ENCODE measurements at regions of chr7 and their contacts with region 1.

Region 1: DNA sequence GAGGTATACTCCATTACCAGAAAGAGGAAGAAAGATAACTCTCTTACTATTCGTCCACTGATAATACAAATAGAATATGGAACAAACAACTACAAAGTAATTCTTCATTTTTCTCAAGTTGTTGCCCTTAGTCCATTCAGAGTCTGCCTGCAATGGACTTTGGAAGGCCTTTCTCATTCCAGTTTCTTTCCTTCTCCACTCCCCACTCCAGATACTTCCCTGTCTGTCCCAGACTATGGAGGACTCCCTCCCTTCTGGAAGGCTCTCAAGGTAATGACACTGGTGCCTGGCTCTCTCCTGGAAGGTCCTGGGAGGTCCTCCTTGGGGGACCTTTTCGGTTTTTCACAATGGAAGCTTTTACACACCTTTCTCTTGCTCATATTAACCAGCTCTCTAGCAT is 167.8 kb downstream of the SDHAF3 start:
- DNase-seq: no peak

Region 2: DNA sequence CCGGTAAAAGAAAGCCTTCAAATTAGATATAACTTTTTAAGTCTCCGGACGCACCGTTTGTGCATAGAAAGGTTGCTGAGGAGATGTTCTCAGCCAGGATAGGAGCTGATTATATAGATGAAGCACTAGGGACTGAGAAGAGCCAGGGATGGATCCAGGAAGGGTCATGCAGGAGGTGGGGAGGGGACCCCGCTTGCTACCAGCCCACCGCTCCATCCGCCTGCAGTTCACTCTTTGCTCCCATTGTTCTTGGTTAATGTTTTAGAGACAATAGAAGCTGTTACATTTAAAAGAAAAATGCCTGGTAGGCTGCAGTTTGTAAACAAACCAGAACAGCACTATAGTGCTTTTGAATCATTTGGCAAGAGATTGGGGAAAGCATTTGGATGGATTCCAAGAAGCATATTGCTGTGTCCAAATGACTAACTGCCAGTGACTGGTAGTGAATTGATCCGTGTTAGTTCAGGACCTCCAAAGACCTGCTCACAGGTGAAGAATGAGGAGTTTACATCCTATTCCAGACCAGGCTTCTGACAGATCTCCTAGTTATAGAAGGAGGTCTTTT is 270.6 kb after region 1 on chr7:
- intact Hi-C with region 1: loop called in 1 of 2 experiments (anchors 5 kb)
- DNase-seq: no peak